ENCODE measurements at regions of chr9 and their contacts with region 1.

Region 1: DNA sequence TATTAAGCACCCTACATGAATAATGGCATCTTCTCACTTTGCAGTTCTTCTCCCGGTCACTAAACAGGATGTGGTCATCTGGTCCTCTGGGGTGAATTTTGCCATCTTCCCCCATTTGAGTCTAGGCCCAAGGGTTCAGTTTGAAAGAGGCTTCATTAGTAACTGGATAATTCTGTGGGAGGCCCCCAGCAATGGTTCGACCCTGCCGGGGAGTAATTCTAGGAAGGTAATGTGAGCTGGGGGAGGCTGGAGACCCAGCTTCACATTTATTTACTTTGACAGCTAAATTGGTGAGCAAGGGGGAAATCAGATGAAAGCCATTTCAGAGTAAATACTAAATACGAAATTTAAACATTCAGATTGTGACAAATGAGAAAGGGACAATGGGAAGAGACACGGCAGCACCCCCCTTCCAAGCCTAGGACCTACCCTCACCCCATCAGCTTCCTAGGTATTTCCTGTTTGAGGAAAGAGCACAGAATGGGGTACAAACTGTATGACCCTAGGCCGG is 4.1 kb upstream of the LHX6 start:
- DNase-seq: no peak
- ATAC-seq: no peak
- H3K4me3 ChIP-seq: no peak overlapping the region
- H3K27ac ChIP-seq: no peak overlapping the region
- H3K4me1 ChIP-seq: no peaks in the 10 kb centered on the region
- H3K27me3 ChIP-seq: peaks cover 5% of the 10 kb centered on the region; the same call in 1 of the 2 replicates
- CTCF ChIP-seq: no peak

Region 2: GRCh38 chr9:120892748-120893610 is 1339.9 kb before region 1 on chr9:
- CTCF ChIA-PET with region 1: interaction called, 10 read pairs
- POLR2A ChIA-PET with region 1: no interaction called
- in situ Hi-C with region 1: no loop called
- intact Hi-C with region 1: no loop called
- DNase-seq: no peak
- ATAC-seq: no peak
- H3K4me3 ChIP-seq: no peak overlapping the region
- H3K27ac ChIP-seq: no peak overlapping the region
- H3K4me1 ChIP-seq: no peaks in the 10 kb centered on the region; the same call in 1 of the 2 replicates
- H3K27me3 ChIP-seq: no peaks in the 10 kb centered on the region
- CTCF ChIP-seq: no peak

Measured in Panc1 (cell line).